BJ (cell line): ENCODE measurements at regions of chr18 and their contacts with region 1.

Region 1: GRCh38 chr18:74081966-74082741 is 65.5 kb downstream of the FBXO15 start:
- DNase-seq: peak; percentile 4
- H3K4me3 ChIP-seq: no peak overlapping the region
- H3K27me3 ChIP-seq: no peaks in the 10 kb centered on the region
- CTCF ChIP-seq: peak; percentile 79

Region 2: GRCh38 chr18:73879766-73880165 is 202.4 kb before region 1 on chr18:
- CTCF ChIA-PET with region 1: no interaction called
- POLR2A ChIA-PET with region 1: no interaction called
- DNase-seq: no peak
- H3K4me3 ChIP-seq: no peak overlapping the region
- H3K27me3 ChIP-seq: no peaks in the 10 kb centered on the region
- CTCF ChIP-seq: no peak

Region 3: DNA sequence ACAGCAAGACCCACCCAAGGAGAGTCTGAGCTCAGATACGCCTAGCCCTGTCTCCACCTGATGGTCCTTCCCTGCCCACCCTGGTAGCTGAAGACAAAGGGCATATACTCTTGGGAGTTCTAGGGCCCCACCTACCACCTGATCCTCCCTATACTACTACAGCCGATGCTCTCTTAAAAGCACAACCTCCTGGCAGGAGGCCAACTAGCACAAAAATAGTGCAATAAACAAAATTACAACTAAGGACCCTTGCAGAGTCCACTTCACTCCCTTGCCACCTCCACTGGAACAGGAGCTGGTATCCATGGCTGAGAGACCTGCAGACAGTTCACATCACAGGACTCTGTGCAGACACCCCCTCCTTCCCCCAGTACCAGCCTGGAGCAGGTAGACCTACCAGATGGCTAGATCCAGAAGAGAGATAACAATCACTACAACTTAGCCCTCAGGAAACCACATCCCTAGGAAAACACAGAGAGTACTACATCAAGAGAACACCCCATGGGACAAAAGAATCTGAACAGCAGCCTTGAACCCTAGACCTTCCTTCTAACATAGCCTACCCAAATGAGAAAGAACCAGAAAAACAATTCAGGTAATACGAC is 15.5 kb after region 1 on chr18:
- CTCF ChIA-PET with region 1: interaction called, 14 read pairs
- POLR2A ChIA-PET with region 1: no interaction called
- DNase-seq: no peak
- H3K4me3 ChIP-seq: no peak overlapping the region
- H3K27me3 ChIP-seq: no peaks in the 10 kb centered on the region
- CTCF ChIP-seq: no peak

Region 4: GRCh38 chr18:74116633-74117554 is 34.7 kb after region 1 on chr18:
- CTCF ChIA-PET with region 1: interaction called, 14 read pairs
- POLR2A ChIA-PET with region 1: no interaction called
- DNase-seq: no peak
- H3K4me3 ChIP-seq: no peak overlapping the region
- H3K27me3 ChIP-seq: no peaks in the 10 kb centered on the region
- CTCF ChIP-seq: peak; percentile 72